H1 (cell line): ENCODE measurements at regions of chr9 and their contacts with region 1.

Region 1: GRCh38 chr9:93464395-93464794 is 11.0 kb upstream of the FAM120AOS start:
- DNase-seq: no peak
- H3K4me3 ChIP-seq: no peak overlapping the region; a peak in 1 of 8 replicates
- H3K27ac ChIP-seq: no peak overlapping the region
- H3K4me1 ChIP-seq: peaks cover 8 to 28% (median 20%) of the 10 kb centered on the region in 4 experiments
- H3K27me3 ChIP-seq: no peaks in the 10 kb centered on the region
- CTCF ChIP-seq: no peak
- EP300 ChIP-seq: no peak
- POLR2A ChIP-seq: no peak
- RAD21 ChIP-seq: no peak

Region 2: DNA sequence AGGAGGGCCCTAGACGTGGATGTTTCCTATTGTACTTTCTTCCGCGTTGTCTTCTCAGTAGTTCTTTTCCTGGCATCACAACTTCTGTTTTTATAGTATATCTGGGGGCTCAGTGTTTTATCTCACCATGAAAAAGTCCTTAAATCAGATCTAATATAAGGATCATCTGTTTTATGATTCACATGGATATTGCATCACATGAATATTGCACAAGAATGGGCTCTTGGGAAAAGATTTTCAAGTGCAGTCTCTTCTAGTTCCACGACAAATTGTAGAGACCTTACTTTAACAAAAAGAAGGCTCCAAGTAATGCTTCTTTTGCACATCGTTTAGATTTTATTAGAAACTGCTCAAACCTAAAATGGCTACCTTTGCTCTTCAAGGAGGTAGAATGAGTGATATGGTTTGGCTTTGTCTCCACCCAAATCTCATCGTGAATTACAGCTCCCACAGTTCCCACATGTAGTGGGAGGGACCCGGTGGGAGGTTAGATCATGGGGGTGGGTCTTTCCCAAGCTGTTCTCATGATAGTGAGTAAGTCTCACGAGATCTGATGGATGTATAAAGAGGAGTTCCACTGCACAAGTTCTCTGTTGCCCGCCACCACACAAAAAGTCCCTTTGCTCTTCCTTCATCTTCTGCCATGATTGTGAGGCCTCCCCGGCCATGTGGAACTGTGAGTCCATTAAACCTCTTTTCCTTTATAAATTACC is 66.6 kb before region 1 on chr9:
- CTCF ChIA-PET with region 1: no interaction called
- POLR2A ChIA-PET with region 1: no interaction called
- DNase-seq: no peak
- H3K4me3 ChIP-seq: no peak overlapping the region
- H3K27ac ChIP-seq: no peak overlapping the region
- H3K4me1 ChIP-seq: no peaks in the 10 kb centered on the region; a peak in 1 of 7 replicates
- H3K27me3 ChIP-seq: no peaks in the 10 kb centered on the region
- CTCF ChIP-seq: no peak
- EP300 ChIP-seq: no peak
- POLR2A ChIP-seq: no peak
- RAD21 ChIP-seq: no peak

Region 3: GRCh38 chr9:93453047-93453914 is 11.1 kb before region 1 on chr9 and contains the start of gene FAM120AOS:
- CTCF ChIA-PET with region 1: interaction called, 8 read pairs
- POLR2A ChIA-PET with region 1: interaction called, 35 read pairs
- DNase-seq: peak; percentile 75 to 81
- H3K4me3 ChIP-seq: peak within 1 kb of the TSS; percentile 81 to 93 (median 90)
- H3K27ac ChIP-seq: no peak within 1 kb of the TSS
- H3K4me1 ChIP-seq: peaks cover 0 to 5% (median 2%) of the 10 kb centered on the region in 4 experiments; a peak in 3 of 7 replicates
- H3K27me3 ChIP-seq: no peaks in the 10 kb centered on the region
- CTCF ChIP-seq: no peak
- EP300 ChIP-seq: no peak
- POLR2A ChIP-seq: 0 out of 3 replicates have a peak, but pooled peaks of 1 of the 2 experiments have one; percentile 23
- RAD21 ChIP-seq: no peak
- total RNA-seq, gene FAM120AOS: 37.6 and 41.6 TPM in 2 replicates